Heart left ventricle (tissue), 16 donors: ENCODE measurements at regions of chr1 and their contacts with region 1.

Region 1: GRCh38 chr1:44294588-44295007 is 60.5 kb downstream of the ERI3 start:
- DNase-seq: peak in 2 of 5 donors; percentile 14 to 44
- ATAC-seq: peak in 2 of 4 donors; percentile 21 to 51
- H3K4me3 ChIP-seq: no peak overlapping the region
- H3K27ac ChIP-seq: peak overlapping the region in 3 of 12 donors; percentile 62 to 76 (median 72)
- H3K4me1 ChIP-seq: peaks cover 0 to 19% (median 7%) of the 10 kb centered on the region in 12 donors
- H3K27me3 ChIP-seq: no peaks in the 10 kb centered on the region
- CTCF ChIP-seq: peak in 4 of 12 donors; percentile 10 to 32 (median 20)
- POLR2A ChIP-seq: no peak

Region 2: GRCh38 chr1:44239961-44240371 is 54.6 kb before region 1 on chr1:
- intact Hi-C with region 1: loop called in 2 of 10 experiments (anchors 2 to 5 kb)
- DNase-seq: peak in 4 of 5 donors; percentile 34 to 84 (median 55)
- ATAC-seq: peak; percentile 86 to 91 (median 89)
- H3K4me3 ChIP-seq: no peak overlapping the region
- H3K27ac ChIP-seq: peak overlapping the region; percentile 63 to 93 (median 84)
- H3K4me1 ChIP-seq: peaks cover 0 to 31% (median 18%) of the 10 kb centered on the region in 12 donors
- H3K27me3 ChIP-seq: no peaks in the 10 kb centered on the region
- CTCF ChIP-seq: no peak
- POLR2A ChIP-seq: no peak

Region 3: GRCh38 chr1:44251989-44252671 is 42.5 kb before region 1 on chr1:
- intact Hi-C with region 1: loop called in 1 of 10 experiments (anchors 5 kb)
- DNase-seq: no peak
- ATAC-seq: no peak
- H3K4me3 ChIP-seq: no peak overlapping the region
- H3K27ac ChIP-seq: no peak overlapping the region
- H3K4me1 ChIP-seq: peaks cover 0 to 28% (median 11%) of the 10 kb centered on the region in 12 donors
- H3K27me3 ChIP-seq: no peaks in the 10 kb centered on the region
- CTCF ChIP-seq: no peak
- POLR2A ChIP-seq: no peak